ENCODE measurements at regions of chr9 and their contacts with region 1.

Region 1: GRCh38 chr9:131253891-131254491 is 22.3 kb downstream of the FAM78A start:
- DNase-seq: peak; percentile 61
- H3K4me3 Mint-ChIP-seq: peak overlapping the region; percentile 28
- H3K27ac Mint-ChIP-seq: peak overlapping the region; percentile 93
- H3K4me1 Mint-ChIP-seq: peaks cover 41% of the 10 kb centered on the region
- H3K27me3 Mint-ChIP-seq: no peaks in the 10 kb centered on the region

Region 2: GRCh38 chr9:131197160-131197911 is 56.7 kb before region 1 on chr9:
- intact Hi-C with region 1: no loop called
- DNase-seq: no peak
- H3K4me3 Mint-ChIP-seq: no peak overlapping the region
- H3K27ac Mint-ChIP-seq: no peak overlapping the region
- H3K4me1 Mint-ChIP-seq: no peaks in the 10 kb centered on the region
- H3K27me3 Mint-ChIP-seq: no peaks in the 10 kb centered on the region

Region 3: DNA sequence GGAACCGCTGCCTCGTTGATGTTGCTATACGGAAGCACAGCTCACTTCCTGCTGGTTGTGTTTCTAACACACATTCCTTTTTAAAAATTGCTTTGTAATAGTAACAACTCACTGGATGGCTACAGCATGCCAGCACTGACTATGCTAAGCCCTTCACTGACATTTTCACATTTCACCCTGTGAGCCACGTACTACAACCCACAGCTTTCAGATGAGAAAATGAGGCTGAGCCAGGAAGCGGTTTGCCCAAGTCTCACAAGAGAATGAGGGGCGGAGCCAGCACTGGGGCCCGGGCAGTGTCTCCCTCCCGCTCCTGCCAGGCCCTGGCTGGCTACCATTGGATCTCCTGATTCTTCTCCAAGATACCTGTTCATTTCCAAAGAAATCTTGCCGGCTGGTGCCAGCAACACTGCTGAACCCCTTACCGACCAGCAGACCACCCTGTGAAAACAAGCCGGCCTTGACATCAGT is 16.0 kb before region 1 on chr9:
- intact Hi-C with region 1: loop called (anchors 1 kb)
- DNase-seq: peak; percentile 96
- H3K4me3 Mint-ChIP-seq: peak overlapping the region; percentile 80
- H3K27ac Mint-ChIP-seq: peak overlapping the region; percentile 93
- H3K4me1 Mint-ChIP-seq: peaks cover 33% of the 10 kb centered on the region
- H3K27me3 Mint-ChIP-seq: no peaks in the 10 kb centered on the region

Measured in activated CD4-positive, alpha-beta T cell treated with anti-CD3 and anti-CD28 coated beads, Interleukin-2, amount 10 ng/mL, durations not matched to agents 24 days and 14 days (primary cell).